ENCODE measurements at regions of chr3 and their contacts with region 1.

Region 1: DNA sequence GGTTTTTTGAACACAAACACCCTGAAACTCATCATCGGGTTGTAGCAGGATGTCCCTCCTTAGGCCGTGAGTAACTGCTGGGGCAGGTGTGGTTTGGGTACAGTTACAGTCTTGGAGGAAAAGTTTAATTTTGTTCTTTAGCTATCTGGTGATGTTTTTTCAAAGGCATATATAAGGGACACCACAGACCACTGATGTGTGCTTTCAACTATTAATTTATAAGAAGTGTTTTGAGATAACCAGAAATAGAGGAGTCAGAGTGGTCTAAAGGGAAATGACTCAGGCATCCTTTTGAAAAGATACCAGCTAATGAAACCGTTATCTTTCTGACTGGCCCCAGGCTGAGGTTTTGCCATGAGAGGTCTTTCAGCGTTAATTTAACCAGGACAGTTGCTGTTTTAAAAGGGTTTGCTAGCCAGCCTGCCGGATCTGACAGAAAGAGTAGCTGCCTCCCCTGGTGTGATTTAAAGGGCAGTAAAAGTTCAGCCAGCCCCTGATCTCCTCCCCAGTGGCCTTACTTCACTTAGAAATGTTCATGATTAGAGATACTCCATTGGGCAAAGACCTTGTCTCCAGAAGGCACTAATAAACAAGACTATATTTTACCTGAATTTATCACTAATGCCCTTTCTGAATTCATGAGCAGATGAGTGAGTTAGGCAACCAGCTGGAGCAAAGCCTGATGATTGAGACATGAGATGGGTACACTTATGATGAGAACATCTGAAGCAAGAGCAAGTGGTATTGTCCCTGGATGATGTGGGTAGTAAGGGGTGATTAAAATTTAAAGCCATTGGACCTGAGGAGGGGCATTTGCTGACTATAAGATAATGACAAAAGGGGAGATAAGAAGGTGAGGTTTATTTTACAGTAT is 482.5 kb upstream of the TBL1XR1 start:
- DNase-seq: peak; percentile 22 to 65
- ATAC-seq: peak; percentile 90 to 95
- H3K4me3 ChIP-seq: no peak overlapping the region
- H3K27ac ChIP-seq: peak overlapping the region in 3 of 4 donors; percentile 44 to 48 (median 47)
- H3K4me1 ChIP-seq: no peaks in the 10 kb centered on the region
- H3K27me3 ChIP-seq: no peaks in the 10 kb centered on the region
- CTCF ChIP-seq: no peak
- POLR2A ChIP-seq: no peak

Region 2: GRCh38 chr3:177468331-177468730 is 211.5 kb before region 1 on chr3:
- in situ Hi-C with region 1: no loop called
- intact Hi-C with region 1: loop called (anchors 10 kb)
- DNase-seq: peak; percentile 33 to 40
- ATAC-seq: no peak
- H3K4me3 ChIP-seq: no peak overlapping the region
- H3K27ac ChIP-seq: no peak overlapping the region
- H3K4me1 ChIP-seq: peaks cover 4 to 44% of the 10 kb centered on the region in 2 donors
- H3K27me3 ChIP-seq: no peaks in the 10 kb centered on the region
- CTCF ChIP-seq: no peak
- POLR2A ChIP-seq: no peak

Region 3: GRCh38 chr3:178028933-178029332 is 349.1 kb after region 1 on chr3:
- in situ Hi-C with region 1: no loop called
- intact Hi-C with region 1: no loop called
- DNase-seq: no peak
- ATAC-seq: no peak
- H3K4me3 ChIP-seq: no peak overlapping the region
- H3K27ac ChIP-seq: no peak overlapping the region
- H3K4me1 ChIP-seq: no peaks in the 10 kb centered on the region
- H3K27me3 ChIP-seq: no peaks in the 10 kb centered on the region
- CTCF ChIP-seq: no peak
- POLR2A ChIP-seq: no peak